ENCODE measurements at regions of chr5 and their contacts with region 1.

Region 1: GRCh38 chr5:160342403-160342941 is 28.0 kb downstream of the C1QTNF2 start:
- DNase-seq: no peak
- CTCF ChIP-seq: no peak

Region 2: GRCh38 chr5:160188142-160189015 is 154.1 kb before region 1 on chr5:
- CTCF ChIA-PET with region 1: interaction called, 18 read pairs
- POLR2A ChIA-PET with region 1: no interaction called
- DNase-seq: peak; percentile 53
- CTCF ChIP-seq: no peak

Region 3: GRCh38 chr5:160199410-160199911 is 143.0 kb before region 1 on chr5:
- CTCF ChIA-PET with region 1: interaction called, 73 read pairs
- POLR2A ChIA-PET with region 1: no interaction called
- DNase-seq: peak; percentile 91
- CTCF ChIP-seq: peak; percentile 90

Region 4: DNA sequence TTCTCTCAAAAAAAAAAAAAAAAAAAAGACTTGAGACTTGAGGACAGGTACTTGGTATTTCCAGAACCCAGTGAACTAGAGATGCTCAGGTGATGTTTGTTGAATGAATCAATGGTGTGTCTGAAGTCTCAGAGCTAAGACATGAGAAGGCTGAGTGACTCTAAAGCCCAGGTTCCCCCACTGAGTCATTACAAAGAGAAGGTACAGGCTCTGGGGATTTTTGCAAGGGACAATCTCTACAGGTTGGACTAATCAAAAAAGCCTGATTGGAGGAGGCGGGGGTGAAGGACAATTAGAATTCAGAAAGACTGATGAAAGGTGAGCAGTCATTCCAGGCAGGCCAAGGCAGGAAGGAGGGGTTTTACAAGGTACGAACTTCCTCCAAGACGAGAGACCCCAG is 121.4 kb before region 1 on chr5:
- CTCF ChIA-PET with region 1: interaction called, 13 read pairs
- POLR2A ChIA-PET with region 1: no interaction called
- DNase-seq: no peak
- CTCF ChIP-seq: no peak

Region 5: DNA sequence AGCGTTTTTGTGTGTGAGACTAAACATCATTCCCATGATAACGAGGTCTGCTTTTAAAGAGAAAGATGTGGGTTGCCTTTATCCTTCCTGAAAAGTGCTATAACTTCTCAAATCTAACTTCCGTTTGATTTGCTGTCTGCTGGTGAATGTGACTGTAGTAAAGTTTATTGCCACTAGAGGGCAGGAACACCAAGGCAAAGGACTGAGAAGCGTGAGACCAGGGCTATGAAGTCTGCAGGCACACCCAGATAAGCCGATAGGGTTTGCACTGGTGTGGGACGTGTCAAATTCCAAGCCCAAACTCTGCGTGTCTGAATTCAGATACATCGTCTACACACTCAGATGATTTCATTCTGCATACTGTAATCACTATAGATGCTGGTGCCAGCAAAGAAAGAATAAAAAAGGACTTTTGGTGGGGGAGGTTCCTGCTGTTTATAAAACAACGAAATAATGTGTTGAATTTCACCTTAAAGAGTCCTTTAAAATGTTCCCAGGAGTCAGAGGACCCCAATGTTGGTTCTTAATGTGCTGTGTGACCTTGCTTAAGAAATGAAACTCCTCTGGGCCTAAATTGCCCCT is 166.4 kb after region 1 on chr5:
- CTCF ChIA-PET with region 1: no interaction called
- POLR2A ChIA-PET with region 1: no interaction called
- DNase-seq: peak; percentile 77
- CTCF ChIP-seq: peak; percentile 89

Measured in GM10248 (cell line).